Posterior cingulate gyrus (tissue), 11 donors: ENCODE measurements at regions of chr2 and their contacts with region 1.

Region 1: DNA sequence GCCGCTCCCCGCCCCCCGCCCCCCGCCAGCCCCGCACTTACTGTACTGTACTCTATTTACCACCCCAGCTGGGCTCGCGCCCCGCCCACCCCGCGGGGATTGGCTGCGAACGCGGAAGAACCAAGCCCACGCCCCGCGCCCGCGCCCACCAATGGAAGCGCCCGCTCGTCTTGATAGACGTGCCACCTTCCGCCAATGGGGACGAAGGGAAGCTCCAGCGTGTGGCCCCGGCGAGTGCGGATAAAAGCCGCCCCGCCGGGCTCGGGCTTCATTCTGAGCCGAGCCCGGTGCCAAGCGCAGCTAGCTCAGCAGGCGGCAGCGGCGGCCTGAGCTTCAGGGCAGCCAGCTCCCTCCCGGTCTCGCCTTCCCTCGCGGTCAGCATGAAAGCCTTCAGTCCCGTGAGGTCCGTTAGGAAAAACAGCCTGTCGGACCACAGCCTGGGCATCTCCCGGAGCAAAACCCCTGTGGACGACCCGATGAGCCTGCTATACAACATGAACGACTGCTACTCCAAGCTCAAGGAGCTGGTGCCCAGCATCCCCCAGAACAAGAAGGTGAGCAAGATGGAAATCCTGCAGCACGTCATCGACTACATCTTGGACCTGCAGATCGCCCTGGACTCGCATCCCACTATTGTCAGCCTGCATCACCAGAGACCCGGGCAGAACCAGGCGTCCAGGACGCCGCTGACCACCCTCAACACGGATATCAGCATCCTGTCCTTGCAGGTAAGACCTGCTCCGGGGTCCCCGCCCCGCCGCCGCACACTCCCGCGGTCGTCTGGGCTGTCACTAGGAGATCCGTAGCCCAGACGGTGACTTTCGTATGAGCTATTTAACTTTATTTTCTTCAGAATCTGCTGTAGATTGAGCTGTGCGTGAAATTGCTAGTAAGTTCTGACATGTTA is at the start of gene ID2:
- DNase-seq: peak; percentile 96 to 100 (median 98)

Region 2: GRCh38 chr2:7118606-7119503 is 1563.2 kb before region 1 on chr2:
- intact Hi-C with region 1: loop called (anchors 5 kb)
- DNase-seq: peak in 9 of 10 donors; percentile 43 to 89 (median 54)

Region 3: GRCh38 chr2:7725171-7725849 is 956.7 kb before region 1 on chr2:
- intact Hi-C with region 1: loop called (anchors 10 kb)
- DNase-seq: no peak

Region 4: GRCh38 chr2:8525582-8526402 is 156.2 kb before region 1 on chr2:
- intact Hi-C with region 1: loop called (anchors 5 kb)
- DNase-seq: peak in 9 of 10 donors; percentile 44 to 94 (median 53)

Region 5: GRCh38 chr2:8627019-8627691 is 54.9 kb before region 1 on chr2:
- intact Hi-C with region 1: loop called (anchors 1 kb)
- DNase-seq: no peak